ENCODE measurements at regions of chr14 and their contacts with region 1.

Region 1: DNA sequence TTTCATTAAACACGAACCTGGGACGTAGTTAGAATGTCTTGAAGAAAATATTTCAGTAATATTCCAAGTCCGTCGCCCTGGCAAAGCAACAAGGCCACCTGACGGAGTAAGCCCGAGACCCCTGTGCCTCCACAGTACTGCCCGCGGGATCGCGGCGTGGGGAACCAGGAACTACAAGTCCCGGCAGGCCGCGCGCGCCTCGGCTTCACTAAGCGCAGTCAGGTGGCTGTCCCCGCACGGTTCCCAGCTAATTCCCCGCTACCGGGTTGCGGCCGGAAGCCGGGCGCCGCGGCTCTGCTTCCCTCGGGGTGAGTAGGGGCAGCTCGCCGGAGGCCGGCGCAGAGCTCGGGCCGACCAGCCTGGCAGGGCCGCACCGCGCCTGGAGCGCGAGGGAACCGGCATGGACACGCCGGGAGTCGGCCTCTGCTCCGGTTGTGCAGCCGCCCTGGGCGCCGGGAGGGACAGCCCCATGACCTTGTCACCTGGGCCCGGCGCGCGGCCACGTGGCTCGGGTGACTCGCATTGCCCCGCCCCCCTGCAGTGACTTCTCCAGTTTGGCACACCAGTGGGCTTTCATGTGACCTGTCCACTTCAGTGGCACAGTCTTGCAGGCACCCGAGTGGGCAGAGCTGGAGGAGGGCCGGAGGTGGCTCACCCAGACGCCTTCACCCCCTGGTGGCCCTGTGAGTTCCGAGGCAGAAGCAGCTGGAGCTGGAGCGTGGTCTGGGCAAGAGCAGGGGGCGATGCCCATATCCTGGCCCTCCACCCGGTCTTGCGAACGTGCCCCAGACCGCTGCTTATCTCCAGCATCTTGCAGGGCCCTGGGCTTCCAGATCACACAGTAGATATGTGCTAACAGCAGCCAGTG is at the start of gene ADCK1:
- H3K4me3 Mint-ChIP-seq: peak within 1 kb of the TSS; percentile 91
- H3K27ac Mint-ChIP-seq: peak within 1 kb of the TSS; percentile 95
- H3K4me1 Mint-ChIP-seq: peaks cover 14% of the 10 kb centered on the region
- H3K27me3 Mint-ChIP-seq: peaks cover 2% of the 10 kb centered on the region

Region 2: DNA sequence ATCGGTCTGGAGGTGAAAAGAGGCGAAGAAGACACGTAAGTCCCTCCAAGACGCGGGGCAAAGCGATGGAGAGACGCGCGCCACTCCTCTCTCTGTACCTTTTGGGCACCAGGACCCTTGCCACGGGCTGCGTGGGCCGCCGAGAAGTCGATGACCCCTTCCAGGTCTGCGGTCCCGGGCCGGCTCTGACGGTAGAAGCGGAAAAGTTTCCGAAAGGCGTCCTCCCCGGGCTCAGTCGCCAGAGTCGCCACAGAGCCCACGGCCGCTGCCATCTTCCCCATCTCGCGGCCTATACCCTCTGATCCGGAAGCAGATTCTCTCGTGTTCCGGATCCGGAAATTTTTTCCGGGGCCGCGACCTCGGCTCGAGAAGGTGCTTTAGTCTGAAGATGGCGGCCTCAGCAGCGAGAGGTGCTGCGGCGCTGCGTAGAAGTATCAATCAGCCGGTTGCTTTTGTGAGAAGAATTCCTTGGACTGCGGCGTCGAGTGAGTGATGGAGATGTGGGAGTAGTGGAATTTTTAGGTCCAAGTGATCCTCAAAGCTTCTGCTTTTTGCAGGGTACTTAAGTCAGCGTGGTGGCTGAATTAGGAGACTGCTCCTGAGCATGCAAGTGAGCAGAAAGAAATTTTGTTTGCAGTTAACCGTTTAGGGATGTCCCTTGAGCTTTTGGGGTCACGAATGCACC is 92.2 kb before region 1 on chr14 and contains the starts of genes ALKBH1 and SLIRP:
- intact Hi-C with region 1: loop called (anchors 5 kb)
- H3K4me3 Mint-ChIP-seq: peak within 1 kb of the TSS; percentile 82
- H3K27ac Mint-ChIP-seq: peak within 1 kb of the TSS; percentile 80
- H3K4me1 Mint-ChIP-seq: peaks cover 29% of the 10 kb centered on the region
- H3K27me3 Mint-ChIP-seq: no peaks in the 10 kb centered on the region

Region 3: GRCh38 chr14:77760381-77761246 is 39.5 kb before region 1 on chr14 and contains the start of gene SNW1:
- intact Hi-C with region 1: loop called (anchors 1 kb)
- H3K4me3 Mint-ChIP-seq: peak within 1 kb of the TSS; percentile 87
- H3K27ac Mint-ChIP-seq: peak within 1 kb of the TSS; percentile 96
- H3K4me1 Mint-ChIP-seq: peaks cover 38% of the 10 kb centered on the region
- H3K27me3 Mint-ChIP-seq: no peaks in the 10 kb centered on the region

Region 4: DNA sequence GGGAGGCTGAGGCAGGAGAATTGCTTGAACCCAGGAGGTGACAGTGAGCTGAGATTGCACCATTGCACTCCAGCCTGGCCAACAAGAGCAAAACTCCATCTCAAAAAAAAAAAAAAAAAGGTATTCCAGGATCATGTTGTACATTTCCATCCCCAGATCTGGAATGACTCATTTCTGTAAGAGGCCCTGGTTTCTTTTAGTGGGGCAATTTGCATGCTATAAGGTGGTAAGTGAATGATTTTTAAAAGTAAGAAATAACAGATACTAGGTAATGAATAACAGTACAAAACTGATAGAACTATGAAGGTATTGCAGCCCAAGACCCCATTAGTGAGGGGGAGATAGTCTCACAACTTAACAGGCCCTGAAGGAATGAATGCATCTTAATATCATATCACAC is 17.9 kb before region 1 on chr14:
- intact Hi-C with region 1: no loop called
- H3K4me3 Mint-ChIP-seq: no peak overlapping the region
- H3K27ac Mint-ChIP-seq: no peak overlapping the region
- H3K4me1 Mint-ChIP-seq: no peaks in the 10 kb centered on the region
- H3K27me3 Mint-ChIP-seq: peaks cover 4% of the 10 kb centered on the region

Measured in dendritic cell treated with granulocyte-macrophage colony-stimulating factor and Interleukin-4, amounts not matched to agents 40 ng/mL and 50 ng/mL, for 4 days (primary cell).